ENCODE measurements at regions of chr5 and their contacts with region 1.

Region 1: DNA sequence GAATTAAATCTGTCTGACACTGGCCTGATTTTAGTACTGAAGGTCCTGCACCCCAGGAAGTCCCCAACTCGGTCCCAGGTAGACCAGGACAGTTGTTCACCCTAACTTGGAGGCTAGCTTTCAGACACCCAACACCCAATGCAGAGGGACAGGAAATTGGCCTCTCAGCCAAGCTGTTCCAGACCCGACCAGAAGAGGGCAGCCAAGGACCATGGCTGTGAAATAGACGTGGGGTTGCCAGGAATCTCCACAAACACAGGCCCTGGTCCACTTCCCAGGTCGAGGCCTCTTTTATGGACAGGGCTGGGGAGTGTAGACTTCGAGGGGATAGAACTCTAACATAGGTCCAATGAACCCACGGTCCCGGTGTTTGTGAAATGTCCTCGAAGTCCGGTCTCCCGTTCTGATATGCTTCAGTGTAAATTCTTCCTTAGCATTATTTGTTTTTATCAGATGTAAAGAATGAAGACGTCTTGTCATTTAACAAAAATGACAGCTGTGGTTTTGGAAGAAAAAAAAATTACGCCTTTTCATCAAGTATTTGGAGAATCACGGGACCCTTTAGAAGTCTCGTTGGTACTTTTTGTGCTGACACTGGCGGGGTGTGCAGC is 260.3 kb upstream of the ADAMTS16 start:
- DNase-seq: peak; percentile 65 to 72
- ATAC-seq: peak; percentile 82 to 94; a peak in 5 of 6 replicates
- H3K4me3 ChIP-seq: no peak overlapping the region
- H3K27ac ChIP-seq: no peak overlapping the region
- H3K4me1 ChIP-seq: no peaks in the 10 kb centered on the region
- CTCF ChIP-seq: peak; percentile 87
- EP300 ChIP-seq: no peak
- POLR2A ChIP-seq: no peak
- RAD21 ChIP-seq: peak; percentile 95 to 97

Region 2: DNA sequence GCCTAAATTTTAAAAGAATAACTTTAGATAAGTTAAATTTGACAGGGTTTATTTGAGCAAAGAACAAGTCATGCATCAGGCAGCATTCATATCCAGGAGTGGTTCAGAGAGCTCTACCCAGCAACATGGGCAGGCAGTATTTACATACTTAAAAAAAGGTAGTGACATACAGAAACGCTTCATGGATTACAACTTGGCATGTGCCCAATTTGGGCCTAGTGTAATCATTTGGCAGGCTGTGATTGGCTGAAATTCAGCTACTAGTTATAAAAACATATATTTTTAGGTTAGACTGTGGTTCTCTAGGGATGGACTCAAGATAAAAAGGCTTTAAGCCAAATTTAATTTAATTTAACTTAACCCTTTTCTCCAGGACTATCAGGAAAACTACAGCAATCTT is 113.7 kb before region 1 on chr5:
- CTCF ChIA-PET with region 1: no interaction called
- POLR2A ChIA-PET with region 1: no interaction called
- DNase-seq: no peak
- ATAC-seq: no peak
- H3K4me3 ChIP-seq: no peak overlapping the region
- H3K27ac ChIP-seq: no peak overlapping the region
- H3K4me1 ChIP-seq: no peaks in the 10 kb centered on the region
- CTCF ChIP-seq: no peak
- EP300 ChIP-seq: no peak
- POLR2A ChIP-seq: no peak
- RAD21 ChIP-seq: no peak

Region 3: GRCh38 chr5:4802044-4802443 is 77.8 kb before region 1 on chr5:
- CTCF ChIA-PET with region 1: no interaction called
- POLR2A ChIA-PET with region 1: no interaction called
- DNase-seq: no peak
- ATAC-seq: no peak
- H3K4me3 ChIP-seq: no peak overlapping the region
- H3K27ac ChIP-seq: no peak overlapping the region
- H3K4me1 ChIP-seq: no peaks in the 10 kb centered on the region
- CTCF ChIP-seq: no peak
- EP300 ChIP-seq: no peak
- POLR2A ChIP-seq: no peak
- RAD21 ChIP-seq: no peak

Region 4: GRCh38 chr5:4868109-4868735 is 11.6 kb before region 1 on chr5:
- CTCF ChIA-PET with region 1: interaction called, 42 read pairs
- POLR2A ChIA-PET with region 1: no interaction called
- DNase-seq: peak; percentile 52 to 76
- ATAC-seq: peak; percentile 82 to 89
- H3K4me3 ChIP-seq: no peak overlapping the region
- H3K27ac ChIP-seq: no peak overlapping the region
- H3K4me1 ChIP-seq: no peaks in the 10 kb centered on the region
- CTCF ChIP-seq: peak; percentile 69
- EP300 ChIP-seq: no peak
- POLR2A ChIP-seq: no peak
- RAD21 ChIP-seq: peak; percentile 68 to 75

Region 5: GRCh38 chr5:4941957-4942830 is 62.4 kb after region 1 on chr5:
- CTCF ChIA-PET with region 1: interaction called, 21 read pairs
- POLR2A ChIA-PET with region 1: no interaction called
- DNase-seq: peak in 1 of 2 experiments; percentile 28
- ATAC-seq: peak in 1 of 2 experiments; percentile 89; a peak in 3 of 6 replicates
- H3K4me3 ChIP-seq: no peak overlapping the region
- H3K27ac ChIP-seq: no peak overlapping the region
- H3K4me1 ChIP-seq: no peaks in the 10 kb centered on the region
- CTCF ChIP-seq: peak; percentile 72
- EP300 ChIP-seq: no peak
- POLR2A ChIP-seq: no peak
- RAD21 ChIP-seq: peak; percentile 47 to 52; a peak in 4 of 5 replicates

Region 6: GRCh38 chr5:5141625-5142532 is 262.1 kb after region 1 on chr5:
- CTCF ChIA-PET with region 1: interaction called, 10 read pairs
- POLR2A ChIA-PET with region 1: no interaction called
- DNase-seq: peak in 1 of 2 experiments; percentile 71
- ATAC-seq: peak in 1 of 2 experiments; percentile 49; a peak in 3 of 6 replicates
- H3K4me3 ChIP-seq: no peak overlapping the region
- H3K27ac ChIP-seq: peak overlapping the region in 1 of 2 experiments; percentile 19; a peak in 1 of 6 replicates
- H3K4me1 ChIP-seq: peaks cover 7% of the 10 kb centered on the region; the same call in 1 of the 3 replicates
- CTCF ChIP-seq: peak; percentile 83
- EP300 ChIP-seq: no peak
- POLR2A ChIP-seq: no peak
- RAD21 ChIP-seq: peak; percentile 87 to 90

Region 7: DNA sequence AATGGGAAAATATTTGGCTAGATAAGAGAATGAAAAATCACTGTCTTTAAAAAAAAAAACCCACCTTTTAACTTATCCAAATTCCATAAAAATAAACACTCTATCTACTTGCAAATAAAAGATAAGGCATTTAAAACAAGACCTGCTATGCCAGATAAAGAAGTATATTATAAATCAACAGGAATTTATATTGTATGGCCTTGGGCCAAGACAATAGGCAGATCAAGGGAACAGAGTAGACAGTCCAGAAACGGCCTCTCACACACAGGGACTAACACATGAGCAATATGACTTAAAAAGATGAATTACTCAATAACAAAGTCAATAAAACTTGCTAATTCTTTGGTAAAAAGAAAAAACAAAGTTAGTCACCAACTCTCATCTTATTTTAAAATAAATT is 508.0 kb after region 1 on chr5:
- CTCF ChIA-PET with region 1: interaction called, 20 read pairs
- POLR2A ChIA-PET with region 1: no interaction called
- DNase-seq: no peak
- ATAC-seq: no peak
- H3K4me3 ChIP-seq: no peak overlapping the region
- H3K27ac ChIP-seq: peak overlapping the region; percentile 19 to 64; a peak in 4 of 6 replicates
- H3K4me1 ChIP-seq: peaks cover 14% of the 10 kb centered on the region
- CTCF ChIP-seq: no peak
- EP300 ChIP-seq: no peak; a peak in 1 of 5 replicates
- POLR2A ChIP-seq: no peak
- RAD21 ChIP-seq: no peak

Measured in A549 (cell line).